ENCODE measurements at regions of chr12 and their contacts with region 1.

Region 1: GRCh38 chr12:24534622-24535021 is 414.3 kb downstream of the BCAT1 start:
- DNase-seq: no peak
- H3K4me3 ChIP-seq: peak overlapping the region; percentile 7 to 10
- H3K27ac ChIP-seq: peak overlapping the region; percentile 58 to 82
- H3K4me1 ChIP-seq: peaks cover 0 to 31% of the 10 kb centered on the region in 2 donors
- H3K27me3 ChIP-seq: no peaks in the 10 kb centered on the region
- CTCF ChIP-seq: no peak

Region 2: DNA sequence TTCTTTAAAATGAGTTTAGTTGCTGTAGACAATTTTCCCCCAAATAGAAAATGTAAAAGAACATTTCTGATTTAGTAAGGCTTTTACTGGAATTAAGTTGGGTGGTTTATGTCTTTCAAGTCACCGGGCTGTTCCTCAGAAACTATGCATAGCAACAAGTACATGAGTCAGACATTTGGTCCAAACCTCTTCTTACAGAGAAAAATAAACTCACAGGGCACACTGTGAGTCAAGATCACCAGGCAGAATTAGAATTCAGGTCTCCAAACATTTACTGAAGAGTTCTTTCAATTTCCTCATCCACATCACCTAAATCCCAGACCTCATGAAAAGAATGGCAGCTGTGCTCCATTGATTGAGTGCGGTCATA is 109.0 kb before region 1 on chr12:
- intact Hi-C with region 1: loop called (anchors 10 kb)
- DNase-seq: no peak
- H3K4me3 ChIP-seq: no peak overlapping the region
- H3K27ac ChIP-seq: peak overlapping the region; percentile 61 to 72
- H3K4me1 ChIP-seq: peaks cover 0 to 8% of the 10 kb centered on the region in 2 donors
- H3K27me3 ChIP-seq: no peaks in the 10 kb centered on the region
- CTCF ChIP-seq: no peak

Region 3: DNA sequence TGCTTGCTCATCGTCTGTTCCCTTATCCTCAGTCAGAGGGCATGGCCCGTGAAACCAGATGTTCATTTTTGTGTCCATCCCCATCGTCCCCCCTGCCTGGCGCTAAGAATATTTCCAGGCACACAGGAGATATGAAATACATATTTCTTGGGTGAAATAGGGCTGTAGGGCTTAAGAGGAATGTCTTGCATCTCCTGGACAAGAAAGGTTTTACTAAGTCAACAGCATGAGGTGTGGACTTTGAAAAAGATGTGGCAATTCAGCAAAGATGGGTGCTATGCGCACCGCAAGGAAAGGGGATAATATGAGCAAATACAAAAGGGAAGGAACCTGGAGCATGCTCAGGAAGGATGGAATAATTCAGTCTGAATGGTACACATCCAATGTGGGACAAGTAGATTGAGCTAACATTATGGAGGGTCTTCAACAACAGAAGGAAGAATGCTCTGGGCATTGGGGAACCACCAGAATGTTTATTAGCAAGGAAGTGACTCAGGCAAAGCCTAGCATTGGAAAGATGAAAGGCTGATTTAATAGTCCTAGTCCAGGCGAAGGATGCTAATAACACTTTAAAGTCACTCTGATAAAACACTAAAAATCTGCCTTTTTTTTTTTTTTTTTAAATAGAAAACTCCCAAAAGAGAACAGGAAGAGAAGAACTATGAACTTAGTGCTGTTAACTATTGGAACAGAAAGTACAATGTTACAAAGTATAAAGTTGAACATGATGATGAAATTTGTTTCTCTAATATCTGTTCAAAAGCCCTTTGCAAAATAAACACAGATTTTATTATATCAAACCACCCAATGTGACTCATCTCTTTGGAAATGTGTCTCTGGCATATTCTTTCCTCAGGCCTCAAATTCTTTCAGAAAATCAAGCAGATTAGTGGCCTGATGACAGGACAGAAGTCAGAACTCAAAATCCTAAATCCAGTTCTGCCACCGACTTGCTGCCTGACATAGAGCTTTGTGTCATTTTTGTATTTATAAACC is 35.2 kb before region 1 on chr12:
- intact Hi-C with region 1: loop called (anchors 5 kb)
- DNase-seq: no peak
- H3K4me3 ChIP-seq: no peak overlapping the region
- H3K27ac ChIP-seq: peak overlapping the region; percentile 51 to 52
- H3K4me1 ChIP-seq: peaks cover 4 to 24% of the 10 kb centered on the region in 2 donors
- H3K27me3 ChIP-seq: no peaks in the 10 kb centered on the region
- CTCF ChIP-seq: no peak